G401 (cell line): ENCODE measurements at regions of chr9 and their contacts with region 1.

Region 1: GRCh38 chr9:137411671-137412380 is 11.1 kb downstream of the EXD3 start:
- DNase-seq: no peak

Region 2: DNA sequence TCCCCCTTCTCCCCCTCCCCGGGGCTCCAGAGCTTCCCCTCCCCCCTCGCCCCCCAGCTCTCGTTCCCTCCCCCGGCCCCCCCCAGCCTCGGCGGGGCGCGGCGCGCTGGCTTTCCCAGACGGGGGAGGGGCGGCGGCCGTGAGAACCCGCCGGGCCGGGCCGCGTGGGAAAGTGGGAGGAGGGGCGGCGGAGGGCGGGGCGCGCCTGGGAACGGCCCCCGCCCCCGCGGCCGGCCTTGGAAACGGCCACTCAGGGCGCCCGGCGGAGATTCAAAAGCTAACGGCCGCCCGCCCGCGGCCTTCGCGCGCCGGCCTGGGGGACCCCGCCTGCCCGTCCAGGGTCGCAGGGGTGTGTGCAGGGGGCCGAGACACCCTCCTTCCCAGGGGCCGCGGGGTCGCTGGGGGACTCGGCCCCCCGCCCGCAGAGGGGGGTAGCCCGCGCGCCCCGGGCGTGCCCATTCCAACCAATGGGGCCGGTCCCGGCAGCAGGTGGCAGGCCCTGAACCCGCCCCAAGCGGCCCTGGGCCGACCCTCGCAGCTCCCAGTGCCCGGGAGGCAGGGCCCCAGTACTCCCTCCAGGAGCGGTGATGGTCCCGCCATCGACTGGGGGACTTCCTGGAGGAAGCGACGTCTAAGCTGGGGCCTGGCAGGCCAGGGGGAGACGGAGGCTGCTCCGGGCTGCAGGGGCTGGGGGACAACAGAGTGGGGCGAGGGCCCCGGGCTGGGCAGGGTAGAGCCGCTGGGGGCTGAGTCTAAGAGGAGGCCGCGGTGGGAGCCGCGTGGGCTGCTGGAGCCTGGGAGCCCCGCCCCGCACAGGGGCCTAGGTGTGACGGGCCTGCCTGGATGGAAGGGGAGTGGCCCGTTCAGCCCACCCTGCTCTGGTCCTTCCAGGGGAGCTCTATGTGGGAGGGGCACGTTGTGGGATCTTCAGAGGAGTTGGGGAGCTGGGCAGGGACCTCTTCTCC is 95.5 kb before region 1 on chr9:
- in situ Hi-C with region 1: loop called (anchors 10 kb)
- DNase-seq: no peak

Region 3: GRCh38 chr9:137354845-137355760 is 56.7 kb before region 1 on chr9:
- in situ Hi-C with region 1: no loop called
- DNase-seq: no peak

Region 4: DNA sequence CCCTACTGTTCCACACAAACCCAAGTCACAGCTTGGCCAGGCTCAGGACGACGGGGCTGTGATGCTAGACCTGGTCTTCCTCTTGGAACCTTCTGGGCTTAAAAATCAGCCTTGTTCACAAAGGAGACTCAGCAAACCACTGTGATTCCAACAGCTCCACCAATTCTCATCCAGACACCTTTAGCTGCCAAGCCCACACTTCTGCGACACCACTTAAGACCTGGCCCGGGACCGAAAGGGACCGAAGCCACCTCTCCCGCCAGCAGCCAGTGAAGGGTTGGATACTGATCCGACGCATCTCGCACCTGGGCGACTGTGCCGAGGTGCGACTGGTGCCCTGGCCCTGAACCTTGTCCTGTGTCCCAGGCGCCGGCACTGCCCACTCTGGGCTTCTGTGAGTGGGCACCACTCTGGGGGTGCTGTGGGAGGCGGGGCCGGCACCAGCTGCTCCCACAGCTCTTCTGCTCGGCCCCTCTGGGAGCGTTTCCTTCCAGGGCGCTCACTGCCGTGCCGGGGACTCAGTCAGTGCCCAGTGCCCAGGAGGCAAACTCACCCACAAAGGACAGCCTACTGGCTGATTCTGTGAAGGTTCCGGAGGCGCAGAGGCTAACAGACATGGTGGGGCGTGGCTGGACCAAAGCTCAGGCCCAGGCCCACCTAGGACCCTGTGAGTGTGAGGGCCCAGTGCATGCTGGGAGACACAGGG is 39.7 kb before region 1 on chr9:
- in situ Hi-C with region 1: no loop called
- DNase-seq: no peak

Region 5: GRCh38 chr9:137382444-137383080 is 29.3 kb before region 1 on chr9:
- in situ Hi-C with region 1: no loop called
- DNase-seq: no peak

Region 6: DNA sequence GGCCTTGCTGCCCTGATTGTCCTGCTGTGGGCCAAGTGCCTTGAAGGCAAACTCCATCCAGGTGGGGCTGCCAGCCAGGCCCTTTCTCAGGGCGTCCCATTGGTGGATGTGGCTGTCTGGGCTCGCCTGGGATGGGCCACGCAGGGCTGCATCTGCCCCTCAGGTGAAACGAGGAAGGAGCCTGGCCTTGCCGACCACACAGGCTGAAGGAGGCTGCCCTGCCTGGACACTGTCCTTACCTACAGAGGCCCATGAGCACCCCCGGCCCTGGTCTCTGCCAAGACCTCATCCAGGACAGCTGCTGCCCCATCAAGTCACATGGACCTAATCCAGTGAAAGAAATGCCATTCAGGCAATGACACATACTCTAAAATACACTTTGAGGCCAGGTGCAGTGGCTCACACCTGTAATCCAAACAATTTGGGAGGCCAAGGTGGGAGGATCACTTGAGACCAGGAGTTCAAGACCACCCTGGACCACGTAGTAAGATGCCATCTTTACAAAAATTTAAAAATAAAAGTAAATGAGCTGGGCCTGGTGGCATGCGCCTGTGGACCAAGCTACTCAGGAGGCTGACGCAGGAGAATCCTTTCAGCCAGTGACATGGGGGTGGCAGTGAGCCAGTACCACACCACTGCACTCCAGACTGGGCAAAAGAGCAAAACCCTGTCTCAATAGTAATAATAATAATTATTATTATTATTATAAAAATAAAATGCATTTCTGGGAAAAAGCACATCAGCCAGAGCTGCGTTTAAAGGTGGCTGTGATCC is 104.5 kb after region 1 on chr9:
- in situ Hi-C with region 1: no loop called
- DNase-seq: no peak